MCF 10A (cell line): ENCODE measurements at regions of chr1 and their contacts with region 1.

Region 1: DNA sequence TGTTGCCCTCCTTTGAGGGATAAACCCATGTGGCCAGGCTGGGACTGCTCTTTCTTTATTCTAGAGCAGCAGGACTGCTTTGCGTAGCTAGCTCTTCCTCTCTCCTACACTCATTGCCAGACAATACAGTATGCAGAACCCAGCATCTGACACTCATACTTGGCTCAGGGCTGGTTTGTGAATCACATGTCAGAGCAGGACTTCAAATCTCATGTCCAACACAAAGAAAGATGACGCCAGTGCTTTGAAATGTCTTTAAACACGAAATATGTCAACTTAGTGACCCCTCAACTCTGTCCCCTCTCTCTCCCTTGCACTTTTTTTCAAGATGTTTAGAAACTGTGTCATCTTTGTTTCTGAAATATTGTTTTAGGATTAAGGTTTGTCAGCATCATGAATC is 135.0 kb downstream of the TGFB2 start:
- DNase-seq: peak; percentile 87
- H3K4me3 Mint-ChIP-seq: no peak overlapping the region
- H3K27ac Mint-ChIP-seq: peak overlapping the region; percentile 29
- H3K4me1 Mint-ChIP-seq: peaks cover 59% of the 10 kb centered on the region
- H3K27me3 Mint-ChIP-seq: no peaks in the 10 kb centered on the region
- CTCF ChIP-seq: no peak

Region 2: DNA sequence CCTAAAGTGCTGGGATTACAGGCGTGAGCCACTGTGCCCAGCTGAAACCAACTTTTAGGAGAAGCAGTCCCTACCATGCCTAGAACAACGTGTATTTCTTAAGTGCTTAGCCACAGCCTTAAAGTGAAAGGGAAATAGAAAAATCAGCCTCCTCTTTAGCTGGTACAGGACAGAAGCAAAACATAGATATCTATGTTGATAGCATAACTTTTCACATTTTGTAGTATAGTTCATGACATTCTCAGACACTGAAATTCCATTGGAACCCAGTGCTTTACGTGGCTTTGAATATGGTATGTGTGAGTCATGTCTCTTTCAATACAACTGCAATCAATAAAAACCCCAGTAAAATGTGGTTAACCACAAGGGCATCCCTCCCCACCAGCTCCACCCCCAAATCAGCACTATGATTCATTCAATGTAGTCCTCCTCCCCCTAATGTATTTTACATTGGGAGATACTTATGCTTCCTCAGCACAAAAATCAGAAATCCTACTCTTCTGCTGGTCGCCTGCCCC is 102.9 kb before region 1 on chr1:
- CTCF ChIA-PET with region 1: no interaction called
- POLR2A ChIA-PET with region 1: interaction called, 7 read pairs
- intact Hi-C with region 1: loop called (anchors 5 kb)
- DNase-seq: peak; percentile 99
- H3K4me3 Mint-ChIP-seq: peak overlapping the region; percentile 39
- H3K27ac Mint-ChIP-seq: peak overlapping the region; percentile 88
- H3K4me1 Mint-ChIP-seq: peaks cover 74% of the 10 kb centered on the region
- H3K27me3 Mint-ChIP-seq: no peaks in the 10 kb centered on the region
- CTCF ChIP-seq: no peak

Region 3: DNA sequence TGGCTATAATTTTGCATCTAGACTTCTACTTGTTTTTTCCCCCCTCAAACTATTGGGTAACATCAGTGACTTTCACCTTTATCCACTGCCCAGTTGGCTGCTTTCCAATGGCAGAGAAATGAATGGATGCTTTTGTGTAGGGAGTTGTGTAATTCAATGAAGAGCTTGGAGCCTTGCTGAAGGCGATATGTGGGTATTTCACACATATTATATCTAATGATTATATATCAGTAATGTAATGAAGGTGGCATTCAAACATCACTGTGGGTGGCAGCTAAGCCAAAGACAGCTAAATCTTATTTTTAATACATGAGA is 53.8 kb before region 1 on chr1:
- CTCF ChIA-PET with region 1: no interaction called
- POLR2A ChIA-PET with region 1: no interaction called
- intact Hi-C with region 1: no loop called
- DNase-seq: peak; percentile 99
- H3K4me3 Mint-ChIP-seq: no peak overlapping the region
- H3K27ac Mint-ChIP-seq: peak overlapping the region; percentile 53
- H3K4me1 Mint-ChIP-seq: peaks cover 18% of the 10 kb centered on the region
- H3K27me3 Mint-ChIP-seq: no peaks in the 10 kb centered on the region
- CTCF ChIP-seq: no peak

Region 4: DNA sequence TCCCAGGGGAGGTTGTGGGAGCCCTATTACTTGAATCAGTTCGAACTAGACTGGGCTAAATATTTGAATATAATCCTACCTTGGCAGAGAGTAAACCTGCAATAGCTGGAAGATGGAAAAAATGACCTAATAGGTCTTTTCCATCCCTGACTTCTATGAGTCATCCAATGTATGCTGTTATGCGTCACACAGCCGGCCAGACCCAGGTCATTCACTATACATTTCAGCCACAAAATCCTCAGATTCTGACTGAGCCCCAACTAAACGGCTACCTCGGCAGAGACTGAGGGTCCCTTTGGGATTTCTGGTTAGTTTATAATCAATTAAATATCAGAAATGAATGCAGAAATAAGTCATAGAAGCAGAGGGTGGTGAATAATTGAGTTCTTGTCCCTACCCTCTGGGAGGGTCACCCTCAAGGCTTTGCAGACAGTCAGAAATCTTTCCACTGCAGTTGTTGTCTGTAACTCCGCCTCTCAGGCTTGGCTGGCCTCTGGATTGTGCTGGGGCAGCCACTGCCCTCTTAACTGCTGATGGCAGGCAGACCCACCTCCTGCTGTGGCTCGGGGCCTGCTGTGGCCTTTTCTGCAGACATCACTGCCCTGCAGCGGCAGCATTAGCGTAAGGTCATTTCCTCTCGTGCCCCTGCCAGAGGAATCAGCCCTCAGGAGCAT is 105.5 kb after region 1 on chr1:
- CTCF ChIA-PET with region 1: no interaction called
- POLR2A ChIA-PET with region 1: interaction called, 3 read pairs
- intact Hi-C with region 1: loop called (anchors 5 kb)
- DNase-seq: peak; percentile 95
- H3K4me3 Mint-ChIP-seq: no peak overlapping the region
- H3K27ac Mint-ChIP-seq: peak overlapping the region; percentile 81
- H3K4me1 Mint-ChIP-seq: peaks cover 26% of the 10 kb centered on the region
- H3K27me3 Mint-ChIP-seq: no peaks in the 10 kb centered on the region
- CTCF ChIP-seq: no peak

Region 5: DNA sequence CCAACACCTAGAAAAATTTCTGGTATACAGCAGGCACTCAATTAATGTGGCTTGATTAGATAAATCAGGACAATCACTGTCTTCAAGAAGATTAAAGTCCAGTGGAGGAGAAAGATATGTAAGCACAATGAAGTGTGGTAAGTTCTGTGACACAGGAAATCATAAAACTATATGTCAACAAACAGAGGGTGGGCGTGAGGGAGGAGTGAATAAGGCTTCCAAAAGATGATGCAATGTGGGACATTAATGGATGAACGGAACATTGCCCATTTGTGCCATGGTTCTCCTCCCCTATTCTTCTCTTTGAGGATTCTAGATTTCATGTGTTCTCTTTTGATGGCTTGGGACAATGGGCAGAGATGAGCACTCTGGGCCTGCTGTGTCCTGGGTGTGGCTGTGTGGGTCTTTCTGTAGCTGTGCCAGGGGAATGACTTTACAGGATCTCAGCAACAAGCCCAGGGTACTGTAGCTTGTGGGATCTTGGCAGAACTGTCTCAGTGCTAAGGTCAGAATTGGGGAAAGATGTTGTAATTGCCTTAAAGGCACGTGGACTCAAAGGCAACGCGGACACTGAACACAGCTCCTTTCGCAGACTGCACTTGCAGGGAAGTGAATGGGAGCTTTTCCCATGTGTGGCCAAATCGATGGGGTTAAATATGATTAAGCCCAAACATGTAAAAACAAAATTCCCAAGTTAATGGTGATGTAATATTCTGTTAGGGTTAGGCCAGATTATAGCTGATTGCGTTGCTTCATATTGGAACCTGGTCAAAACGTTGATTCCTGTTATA is 231.9 kb after region 1 on chr1:
- CTCF ChIA-PET with region 1: interaction called, 3 read pairs
- POLR2A ChIA-PET with region 1: no interaction called
- intact Hi-C with region 1: loop called (anchors 5 kb)
- DNase-seq: peak; percentile 99
- H3K4me3 Mint-ChIP-seq: no peak overlapping the region
- H3K27ac Mint-ChIP-seq: peak overlapping the region; percentile 33
- H3K4me1 Mint-ChIP-seq: peaks cover 53% of the 10 kb centered on the region
- H3K27me3 Mint-ChIP-seq: no peaks in the 10 kb centered on the region
- CTCF ChIP-seq: no peak